Left colon (tissue), 2 donors: ENCODE measurements at regions of chr11 and their contacts with region 1.

Region 1: DNA sequence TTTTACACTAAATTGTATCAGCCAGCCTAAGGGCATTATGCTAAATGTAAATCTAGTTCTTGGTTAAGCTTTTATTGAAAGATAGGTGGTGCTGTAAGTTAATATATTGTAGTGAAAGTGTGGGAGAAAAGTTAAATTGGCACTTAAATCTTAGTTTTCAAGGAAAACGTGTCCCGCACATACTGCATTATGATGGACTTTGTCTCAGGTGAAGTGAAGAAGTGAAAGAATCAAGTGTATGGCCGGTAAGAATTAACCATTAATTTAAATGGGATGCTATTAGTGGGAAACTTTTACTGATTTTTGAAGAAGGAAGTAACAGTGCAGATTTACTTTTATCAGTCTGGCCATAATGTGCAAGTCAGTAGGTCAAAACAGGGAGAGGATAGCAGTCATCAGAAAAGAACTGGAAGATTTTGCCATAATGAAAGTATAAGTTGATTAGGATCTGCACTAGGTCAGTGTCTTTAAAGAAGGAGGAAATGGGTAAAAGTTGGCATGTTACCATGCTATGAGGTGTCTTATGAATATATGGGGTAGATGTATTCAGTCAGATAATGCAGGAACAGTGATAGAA is 81.6 kb downstream of the PDHX start:
- DNase-seq: no peak
- ATAC-seq: peak; percentile 75

Region 2: GRCh38 chr11:35237860-35238715 is 240.0 kb after region 1 on chr11:
- intact Hi-C with region 1: loop called in 1 of 2 experiments (anchors 5 kb)
- DNase-seq: peak in 1 of 2 donors; percentile 39
- ATAC-seq: no peak

Region 3: DNA sequence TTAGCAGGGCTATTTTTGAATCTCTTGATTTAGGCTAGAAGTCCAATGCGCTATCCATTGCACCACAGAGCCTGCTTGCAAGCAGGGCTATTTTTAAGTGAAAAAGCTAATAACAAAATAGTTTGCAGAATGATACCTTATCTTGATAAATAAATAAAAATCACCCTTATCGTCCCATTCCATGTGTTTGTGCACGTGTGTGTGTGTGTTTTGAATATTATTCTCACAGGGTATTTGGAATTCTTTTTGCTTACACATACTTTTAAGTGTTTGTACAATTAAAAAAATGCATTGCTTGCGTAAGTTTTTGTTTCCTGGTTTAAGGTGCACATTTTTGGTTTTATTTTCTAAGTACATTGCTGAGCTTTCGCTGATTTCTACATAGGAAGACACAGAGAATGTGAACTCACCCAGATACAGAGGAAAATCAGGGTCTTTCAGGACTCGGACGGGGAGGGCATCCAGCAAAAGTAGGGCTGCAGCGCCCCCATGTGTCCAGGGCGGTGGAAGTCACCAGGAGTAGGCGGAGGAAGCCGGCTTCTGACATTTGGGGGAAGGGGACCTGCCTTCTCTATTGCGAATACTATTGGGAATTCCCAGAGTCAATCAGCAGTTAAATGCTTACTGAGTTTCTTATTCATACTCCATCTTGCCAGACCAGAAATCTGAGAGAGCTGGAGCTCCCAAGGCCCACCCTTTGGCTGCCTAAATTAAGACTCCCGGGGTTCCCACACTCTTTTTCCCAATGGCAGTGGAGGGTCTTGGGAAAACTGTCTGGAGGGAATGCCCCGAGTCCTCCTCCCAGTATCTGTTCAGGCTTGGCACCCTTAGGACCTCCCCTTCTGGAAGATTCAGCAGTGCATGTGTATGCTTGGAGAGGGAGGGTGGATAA is 394.1 kb after region 1 on chr11:
- intact Hi-C with region 1: loop called in 1 of 2 experiments (anchors 10 kb)
- DNase-seq: peak; percentile 63 to 87
- ATAC-seq: peak; percentile 75